ENCODE measurements at regions of chr1 and their contacts with region 1.

Region 1: GRCh38 chr1:51569284-51570062 is 47.4 kb upstream of the OSBPL9 start:
- DNase-seq: peak; percentile 64
- ATAC-seq: peak; percentile 92
- H3K4me3 Mint-ChIP-seq: no peak overlapping the region
- H3K27ac Mint-ChIP-seq: peak overlapping the region; percentile 87
- H3K4me1 Mint-ChIP-seq: peaks cover 32% of the 10 kb centered on the region
- H3K27me3 Mint-ChIP-seq: no peaks in the 10 kb centered on the region

Region 2: DNA sequence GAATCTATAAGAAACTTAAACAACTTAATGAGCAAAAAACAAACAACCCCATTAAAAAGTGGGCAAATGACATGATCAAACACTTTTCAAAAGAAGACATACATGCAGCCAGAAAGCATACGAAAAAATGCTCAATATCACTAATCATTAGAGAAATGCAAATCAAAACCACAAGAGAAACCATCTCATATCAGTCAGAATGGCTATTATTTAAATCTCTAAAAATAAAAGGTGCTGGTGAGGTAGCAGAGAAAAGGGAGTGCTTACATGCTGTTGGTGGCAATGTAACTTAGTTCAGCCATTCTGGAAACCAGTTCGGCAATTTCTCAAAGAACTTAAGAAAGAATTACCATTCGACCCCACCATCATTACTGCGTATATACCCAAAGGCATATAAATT is 757.1 kb before region 1 on chr1:
- CTCF ChIA-PET with region 1: no interaction called
- POLR2A ChIA-PET with region 1: no interaction called
- intact Hi-C with region 1: no loop called
- DNase-seq: no peak
- ATAC-seq: no peak
- H3K4me3 Mint-ChIP-seq: no peak overlapping the region
- H3K27ac Mint-ChIP-seq: no peak overlapping the region
- H3K4me1 Mint-ChIP-seq: peaks cover 17% of the 10 kb centered on the region
- H3K27me3 Mint-ChIP-seq: no peaks in the 10 kb centered on the region

Region 3: DNA sequence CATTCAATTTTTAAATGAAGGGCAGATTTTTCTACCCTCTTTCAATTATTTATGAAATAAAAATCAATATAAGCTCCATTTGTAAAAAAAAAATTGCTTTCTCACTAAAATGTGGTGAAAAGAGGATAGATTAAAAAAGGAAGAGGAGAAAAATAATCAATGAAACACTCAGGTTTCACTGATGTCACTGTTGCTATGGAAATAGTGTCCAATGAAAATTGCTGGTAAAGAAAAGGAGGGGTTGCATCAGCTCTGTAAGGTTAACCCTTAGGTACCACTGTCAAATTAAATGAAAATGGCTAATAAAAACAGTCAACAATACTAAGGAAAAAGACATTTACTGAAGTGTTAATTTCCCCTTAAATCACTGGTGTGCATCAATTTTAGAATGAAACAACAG is 147.5 kb before region 1 on chr1:
- CTCF ChIA-PET with region 1: no interaction called
- POLR2A ChIA-PET with region 1: no interaction called
- intact Hi-C with region 1: no loop called
- DNase-seq: no peak
- ATAC-seq: peak; percentile 68
- H3K4me3 Mint-ChIP-seq: peak overlapping the region; percentile 35
- H3K27ac Mint-ChIP-seq: peak overlapping the region; percentile 59
- H3K4me1 Mint-ChIP-seq: peaks cover 13% of the 10 kb centered on the region
- H3K27me3 Mint-ChIP-seq: no peaks in the 10 kb centered on the region

Region 4: GRCh38 chr1:51543877-51544276 is 25.6 kb before region 1 on chr1:
- CTCF ChIA-PET with region 1: no interaction called
- POLR2A ChIA-PET with region 1: no interaction called
- intact Hi-C with region 1: loop called in 1 of 2 experiments (anchors 2 kb)
- DNase-seq: no peak
- ATAC-seq: peak; percentile 47
- H3K4me3 Mint-ChIP-seq: no peak overlapping the region
- H3K27ac Mint-ChIP-seq: no peak overlapping the region
- H3K4me1 Mint-ChIP-seq: peaks cover 33% of the 10 kb centered on the region
- H3K27me3 Mint-ChIP-seq: no peaks in the 10 kb centered on the region

Measured in activated CD4-positive, alpha-beta T cell treated with anti-CD3 and anti-CD28 coated beads for 36 hours (primary cell).